ENCODE measurements at regions of chr7 and their contacts with region 1.

Region 1: DNA sequence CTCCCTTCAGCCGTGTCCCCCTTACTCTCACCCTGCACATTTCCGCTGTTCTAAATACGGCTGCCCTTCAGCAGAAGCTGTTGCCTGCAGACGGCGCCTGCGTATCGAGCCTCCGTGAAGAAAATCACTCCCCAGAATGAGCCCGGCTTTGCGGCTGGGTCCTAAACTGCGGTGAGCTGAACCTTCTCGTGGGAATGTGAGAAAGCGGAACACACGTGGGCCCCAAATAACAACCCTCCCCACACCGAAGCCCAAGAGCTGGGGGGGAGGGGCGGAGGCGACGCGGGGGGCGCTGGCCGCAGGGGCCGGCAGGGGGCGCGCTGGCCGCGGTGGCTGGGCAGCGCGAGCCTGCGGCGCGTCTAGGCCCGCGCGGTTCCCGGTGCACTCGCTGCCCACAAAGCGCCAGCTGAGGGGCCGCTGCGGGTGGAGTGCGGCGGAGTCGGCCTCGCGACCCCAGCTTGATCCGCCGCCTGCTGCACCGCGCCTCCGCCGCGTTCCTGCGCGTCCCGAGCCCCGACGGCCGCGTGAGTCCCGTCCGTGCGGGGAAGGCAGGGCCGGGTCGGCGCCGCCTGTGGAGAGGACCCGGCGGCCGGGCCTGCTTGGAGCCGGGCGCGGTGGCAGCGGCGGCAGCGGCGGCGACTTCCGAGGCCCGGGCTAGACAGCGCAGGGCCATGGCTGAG is at the start of gene ZNF398:
- DNase-seq: peak; percentile 67
- H3K4me3 ChIP-seq: peak within 1 kb of the TSS; percentile 65 to 94 (median 89)
- H3K27ac ChIP-seq: peak within 1 kb of the TSS; percentile 26
- H3K4me1 ChIP-seq: peaks cover 22% of the 10 kb centered on the region
- H3K27me3 ChIP-seq: no peaks in the 10 kb centered on the region
- CTCF ChIP-seq: peak; percentile 24 to 53
- total RNA-seq, gene ZNF398: 16.0 to 26.2 TPM

Region 2: GRCh38 chr7:149125863-149126661 is 21.1 kb before region 1 on chr7 and contains the start of gene ZNF425:
- CTCF ChIA-PET with region 1: no interaction called
- dilution Hi-C with region 1: no loop called
- in situ Hi-C with region 1: no loop called
- intact Hi-C with region 1: loop called (anchors 1 kb)
- DNase-seq: peak; percentile 92
- H3K4me3 ChIP-seq: peak within 1 kb of the TSS; percentile 67 to 87 (median 78)
- H3K27ac ChIP-seq: peak within 1 kb of the TSS; percentile 93
- H3K4me1 ChIP-seq: peaks cover 7% of the 10 kb centered on the region
- H3K27me3 ChIP-seq: no peaks in the 10 kb centered on the region
- CTCF ChIP-seq: peak; percentile 61 to 94
- total RNA-seq, gene ZNF425: 3.0 to 3.3 TPM

Region 3: DNA sequence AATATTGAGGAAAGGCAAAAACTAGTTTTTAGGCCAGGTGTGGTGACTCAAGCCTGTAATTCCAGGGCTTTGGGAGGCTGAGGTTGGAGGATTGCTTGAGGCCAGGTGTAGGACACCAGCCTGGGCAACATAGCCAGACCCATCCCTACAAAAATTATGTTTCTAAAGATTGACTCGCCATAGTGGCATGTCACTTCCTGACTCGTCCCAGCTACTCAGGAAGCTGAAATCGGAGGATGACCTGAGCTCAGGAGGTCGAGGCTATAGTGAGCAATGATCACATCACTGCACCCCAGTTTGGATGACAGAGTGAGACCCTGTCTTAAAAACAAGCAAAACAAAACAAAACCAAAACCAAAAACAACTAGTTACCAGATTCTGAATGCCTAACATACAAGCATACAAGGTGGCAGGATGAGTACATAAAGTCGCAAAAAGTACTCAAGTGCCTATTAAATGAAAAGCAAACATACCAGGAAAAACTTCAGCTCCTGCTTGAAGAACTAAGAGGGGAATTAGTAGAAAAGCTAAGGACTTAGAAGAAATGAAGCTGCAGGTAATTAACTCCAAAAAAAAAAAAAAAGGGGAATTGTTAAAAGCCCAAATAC is 14.1 kb after region 1 on chr7:
- CTCF ChIA-PET with region 1: no interaction called
- dilution Hi-C with region 1: no loop called
- in situ Hi-C with region 1: no loop called
- intact Hi-C with region 1: loop called (anchors 2 kb)
- DNase-seq: peak; percentile 25
- H3K4me3 ChIP-seq: no peak overlapping the region
- H3K27ac ChIP-seq: no peak overlapping the region
- H3K4me1 ChIP-seq: peaks cover 8% of the 10 kb centered on the region
- H3K27me3 ChIP-seq: no peaks in the 10 kb centered on the region
- CTCF ChIP-seq: no peak

Region 4: DNA sequence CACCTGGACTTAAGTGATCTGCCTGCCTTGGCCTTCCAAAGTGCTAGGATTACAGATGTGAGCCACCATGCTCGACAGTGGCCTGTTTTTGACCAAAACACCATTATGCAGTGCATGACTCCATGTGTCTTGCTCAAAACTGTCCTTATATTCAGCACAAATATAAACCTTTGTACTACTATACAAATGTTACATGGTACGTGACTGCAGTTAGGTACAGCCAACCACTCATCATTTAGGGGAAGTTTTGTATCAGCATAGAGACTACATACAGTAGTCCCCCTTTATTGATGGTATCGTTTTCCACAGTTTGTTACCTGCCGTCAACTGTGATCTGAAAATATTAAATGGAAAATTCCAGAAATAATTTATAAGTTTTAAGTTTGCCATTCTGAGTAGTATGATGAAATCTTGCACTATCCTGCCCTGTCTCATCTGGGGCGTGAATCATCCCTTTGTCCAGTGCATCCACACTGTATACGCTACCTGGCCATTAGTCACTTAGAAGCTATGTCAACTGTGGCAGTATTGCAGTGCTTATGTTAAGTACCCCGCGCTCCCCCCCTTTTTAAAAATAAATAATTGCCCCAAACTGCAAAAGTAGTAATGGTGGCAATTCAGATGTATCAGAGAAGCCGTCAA is 24.8 kb after region 1 on chr7:
- CTCF ChIA-PET with region 1: no interaction called
- dilution Hi-C with region 1: no loop called
- in situ Hi-C with region 1: no loop called
- intact Hi-C with region 1: loop called (anchors 1 kb)
- DNase-seq: peak; percentile 83
- H3K4me3 ChIP-seq: no peak overlapping the region
- H3K27ac ChIP-seq: peak overlapping the region; percentile 95
- H3K4me1 ChIP-seq: peaks cover 17% of the 10 kb centered on the region
- H3K27me3 ChIP-seq: no peaks in the 10 kb centered on the region
- CTCF ChIP-seq: no peak